ENCODE measurements at regions of chr4 and their contacts with region 1.

Region 1: DNA sequence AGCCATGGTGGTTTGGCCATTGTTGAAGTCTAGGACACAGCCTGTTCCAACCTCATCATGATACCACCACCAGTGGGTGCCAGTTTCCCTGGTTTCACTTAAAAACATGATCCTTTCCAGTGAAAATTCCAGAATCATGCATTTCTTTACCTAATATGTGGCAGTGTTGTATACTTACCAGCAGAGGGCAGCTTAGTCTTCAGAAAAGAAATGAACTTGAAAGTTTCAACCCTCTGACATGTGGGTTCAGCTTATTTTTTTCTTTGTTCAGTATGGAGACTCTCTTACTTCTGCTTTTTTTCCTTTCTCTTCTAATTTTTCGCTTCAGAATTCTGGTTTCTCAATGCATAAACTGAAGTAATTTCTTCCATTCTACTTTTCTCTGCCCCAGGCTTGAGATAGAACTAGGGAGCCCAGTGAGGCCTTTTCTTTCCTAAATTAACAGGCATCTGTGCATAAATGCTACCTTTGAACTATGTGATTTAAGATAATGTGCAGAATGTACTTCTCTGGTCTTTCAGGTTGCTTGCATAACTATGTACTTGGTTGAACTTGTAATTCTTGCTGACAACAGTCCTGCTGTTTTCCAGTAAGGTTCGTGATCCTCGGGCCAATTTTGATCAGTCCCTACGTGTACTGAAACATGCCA is 10.7 kb downstream of the LIAS start:
- DNase-seq: peak in 1 of 2 donors; percentile 16
- ATAC-seq: peak in 7 of 8 donors; percentile 64 to 85 (median 74)
- H3K4me3 ChIP-seq: no peak overlapping the region
- H3K27ac ChIP-seq: peak overlapping the region in 2 of 10 donors; percentile 11 to 66
- H3K4me1 ChIP-seq: peaks cover 0 to 12% (median 0%) of the 10 kb centered on the region in 9 donors
- H3K27me3 ChIP-seq: no peaks in the 10 kb centered on the region
- CTCF ChIP-seq: peak; percentile 58 to 89 (median 83)

Region 2: GRCh38 chr4:39521253-39521919 is 51.8 kb after region 1 on chr4:
- intact Hi-C with region 1: loop called in 2 of 10 experiments (anchors 5 kb)
- DNase-seq: no peak
- ATAC-seq: no peak
- H3K4me3 ChIP-seq: no peak overlapping the region
- H3K27ac ChIP-seq: no peak overlapping the region
- H3K4me1 ChIP-seq: peaks cover 0 to 18% (median 6%) of the 10 kb centered on the region in 9 donors
- H3K27me3 ChIP-seq: no peaks in the 10 kb centered on the region
- CTCF ChIP-seq: no peak

Region 3: DNA sequence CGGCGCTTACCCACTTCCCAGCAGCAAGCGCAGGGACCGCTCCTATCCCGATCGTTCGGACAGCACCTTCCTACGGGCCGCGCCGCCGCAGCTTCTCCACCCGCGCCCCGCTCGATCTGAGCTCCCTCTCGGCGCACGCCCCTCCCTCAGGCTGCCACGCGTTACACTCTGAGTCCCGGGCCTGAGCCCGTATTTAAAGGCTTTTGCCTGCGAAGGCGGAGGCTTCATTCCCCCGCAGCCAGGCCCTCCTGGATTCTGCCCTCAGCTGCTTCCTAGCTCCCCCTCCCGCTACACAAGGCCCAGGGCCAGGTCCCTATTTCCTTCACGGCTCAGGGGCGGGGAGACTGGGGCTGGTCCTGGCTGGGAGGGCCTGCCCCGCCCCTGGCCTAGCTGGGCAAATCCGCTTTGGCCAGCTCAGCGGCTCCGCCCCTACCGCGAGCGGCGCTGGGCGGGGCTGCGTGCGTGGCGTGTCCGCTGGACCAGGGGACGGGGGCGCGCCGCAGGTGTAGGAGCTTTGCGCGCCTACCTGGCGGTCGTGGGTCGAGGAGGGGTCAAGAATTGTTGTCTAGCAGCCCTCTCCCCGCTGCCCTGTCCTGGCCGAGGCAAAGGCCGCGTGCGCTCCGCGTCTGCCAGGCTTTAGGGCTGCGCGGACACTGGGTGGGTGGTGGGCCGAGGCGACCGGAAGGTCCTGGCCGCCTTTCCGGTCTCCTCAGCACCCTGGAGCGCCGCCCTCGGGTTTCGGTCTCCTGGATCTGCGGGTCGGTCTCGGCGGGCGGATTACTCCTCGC is 57.9 kb after region 1 on chr4 and contains the start of gene UGDH:
- intact Hi-C with region 1: loop called in 2 of 10 experiments (anchors 5 kb)
- DNase-seq: peak; percentile 96 to 97
- ATAC-seq: peak; percentile 98 to 100 (median 99)
- H3K4me3 ChIP-seq: peak within 1 kb of the TSS; percentile 74 to 98 (median 88)
- H3K27ac ChIP-seq: peak within 1 kb of the TSS; percentile 92 to 99 (median 96)
- H3K4me1 ChIP-seq: peaks cover 0 to 31% (median 21%) of the 10 kb centered on the region in 9 donors
- H3K27me3 ChIP-seq: no peaks in the 10 kb centered on the region
- CTCF ChIP-seq: peak in 5 of 9 donors; percentile 2 to 36 (median 26)
- total RNA-seq, gene UGDH: 10.8 to 27.3 (median 12.5) TPM

Region 4: GRCh38 chr4:39638354-39639240 is 169.0 kb after region 1 on chr4 and contains the start of gene SMIM14:
- intact Hi-C with region 1: loop called in 3 of 10 experiments (anchors 2 to 10 kb)
- DNase-seq: peak; percentile 98 to 99
- ATAC-seq: peak; percentile 97 to 100 (median 98)
- H3K4me3 ChIP-seq: peak within 1 kb of the TSS; percentile 80 to 95 (median 92)
- H3K27ac ChIP-seq: peak within 1 kb of the TSS; percentile 86 to 99 (median 98)
- H3K4me1 ChIP-seq: peaks cover 0 to 35% (median 27%) of the 10 kb centered on the region in 9 donors
- H3K27me3 ChIP-seq: no peaks in the 10 kb centered on the region
- CTCF ChIP-seq: peak in 4 of 9 donors; percentile 24 to 35 (median 27)
- total RNA-seq, gene SMIM14: 9.3 to 15.2 (median 11.8) TPM

Region 5: GRCh38 chr4:39718366-39719323 is 249.1 kb after region 1 on chr4:
- intact Hi-C with region 1: no loop called
- DNase-seq: no peak
- ATAC-seq: peak in 1 of 8 donors; percentile 45
- H3K4me3 ChIP-seq: no peak overlapping the region
- H3K27ac ChIP-seq: no peak overlapping the region
- H3K4me1 ChIP-seq: peaks cover 4 to 73% (median 24%) of the 10 kb centered on the region in 9 donors
- H3K27me3 ChIP-seq: no peaks in the 10 kb centered on the region
- CTCF ChIP-seq: no peak

Region 6: GRCh38 chr4:40056716-40057585 is 587.4 kb after region 1 on chr4 and contains the start of gene N4BP2:
- intact Hi-C with region 1: loop called in 1 of 10 experiments (anchors 10 kb)
- DNase-seq: peak; percentile 81 to 87
- ATAC-seq: peak; percentile 81 to 92 (median 89)
- H3K4me3 ChIP-seq: peak within 1 kb of the TSS; percentile 57 to 99 (median 94)
- H3K27ac ChIP-seq: peak within 1 kb of the TSS; percentile 98 to 100 (median 100)
- H3K4me1 ChIP-seq: peaks cover 0 to 27% (median 15%) of the 10 kb centered on the region in 9 donors
- H3K27me3 ChIP-seq: no peaks in the 10 kb centered on the region
- CTCF ChIP-seq: peak; percentile 46 to 96 (median 79)
- total RNA-seq, gene N4BP2: 3.0 to 6.9 (median 5.4) TPM

Region 7: DNA sequence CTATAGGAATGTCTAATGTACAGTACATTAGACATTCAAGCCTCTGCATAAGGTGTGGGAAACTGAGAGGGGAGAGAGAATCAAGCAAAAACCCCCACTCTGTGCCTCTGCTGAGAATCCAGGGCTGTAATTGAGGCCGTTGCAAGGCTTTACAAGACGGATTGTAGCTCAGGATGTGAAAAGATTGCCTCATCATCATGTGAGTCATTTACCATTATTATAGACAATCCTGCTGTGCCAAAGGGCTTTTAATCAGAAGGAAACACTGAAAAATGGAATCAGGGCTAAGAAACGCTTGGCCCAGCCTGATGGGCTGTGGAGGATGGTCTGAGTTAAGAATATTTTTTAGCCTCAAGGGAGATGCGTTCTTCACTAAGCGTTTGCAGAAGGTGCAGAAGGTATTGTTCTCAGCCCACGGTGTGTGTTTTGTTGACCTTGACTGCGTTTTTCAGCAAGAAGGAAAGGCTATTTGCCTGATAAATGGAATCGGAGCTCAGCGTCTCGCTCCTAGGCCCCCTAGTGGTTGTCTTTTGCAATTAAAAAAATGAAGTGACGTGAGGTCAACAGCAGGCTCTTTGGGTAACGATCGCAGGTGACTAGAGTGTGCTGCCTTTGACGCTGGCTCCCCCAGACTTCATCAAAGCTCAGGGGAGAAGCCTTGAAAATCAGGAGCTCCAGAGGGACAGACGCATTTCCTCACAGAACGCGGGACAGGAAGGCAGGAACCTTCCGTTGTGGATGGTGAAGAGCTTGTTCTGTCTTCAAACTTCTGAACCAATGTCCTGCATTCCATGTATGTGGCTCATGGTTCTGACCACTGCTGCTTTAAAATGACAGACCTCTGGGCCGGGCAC is 847.5 kb after region 1 on chr4:
- intact Hi-C with region 1: loop called in 1 of 10 experiments (anchors 10 kb)
- DNase-seq: peak in 1 of 2 donors; percentile 39
- ATAC-seq: peak; percentile 54 to 87 (median 72)
- H3K4me3 ChIP-seq: peak overlapping the region in 8 of 10 donors; percentile 4 to 47 (median 32)
- H3K27ac ChIP-seq: peak overlapping the region in 6 of 10 donors; percentile 16 to 79 (median 36)
- H3K4me1 ChIP-seq: peaks cover 0 to 20% (median 9%) of the 10 kb centered on the region in 9 donors
- H3K27me3 ChIP-seq: peaks cover 0 to 5% (median 0%) of the 10 kb centered on the region in 7 donors
- CTCF ChIP-seq: peak; percentile 58 to 86 (median 79)

Measured in heart right ventricle (tissue), 16 donors.